CD14-positive monocyte (primary cell): ENCODE measurements at regions of chr14 and their contacts with region 1.

Region 1: DNA sequence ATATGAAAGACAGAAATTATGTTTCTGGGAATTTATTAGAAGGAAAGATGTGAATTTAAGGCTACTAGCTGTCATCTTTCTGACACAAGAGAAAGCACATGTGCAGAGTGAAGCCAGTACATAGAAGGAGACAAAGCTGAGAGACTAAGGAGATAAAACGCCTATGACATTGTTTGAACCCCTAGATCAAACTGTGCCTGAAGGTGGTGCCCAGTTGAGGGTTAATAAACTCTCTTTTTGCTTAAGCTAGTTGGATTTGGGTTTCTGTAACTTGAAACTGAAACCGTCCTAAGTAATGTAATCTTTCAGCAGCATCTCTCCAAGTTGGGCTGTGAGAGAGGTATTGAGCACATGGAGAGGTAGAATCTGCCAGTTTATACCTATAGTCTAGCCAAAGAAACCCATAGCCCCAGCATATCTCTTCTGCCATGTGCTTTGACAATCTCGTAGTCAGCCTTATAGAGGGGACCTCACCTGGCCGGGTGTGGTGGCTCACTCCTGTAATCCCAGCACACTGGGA is 84.2 kb downstream of the LRRC74A start:
- DNase-seq: no peak
- H3K4me3 ChIP-seq: no peak overlapping the region
- H3K4me3 Mint-ChIP-seq: no peak overlapping the region
- H3K27ac ChIP-seq: no peak overlapping the region
- H3K27ac Mint-ChIP-seq: peak overlapping the region in 1 of 7 donors; percentile 75
- H3K4me1 ChIP-seq: peaks cover 22 to 26% of the 10 kb centered on the region in 2 donors
- H3K4me1 Mint-ChIP-seq: peaks cover 23% of the 10 kb centered on the region
- H3K27me3 ChIP-seq: no peaks in the 10 kb centered on the region
- H3K27me3 Mint-ChIP-seq: peaks cover 2 to 9% (median 3%) of the 10 kb centered on the region in 3 donors
- CTCF ChIP-seq: no peak

Region 2: GRCh38 chr14:77028384-77029231 is 118.2 kb after region 1 on chr14 and contains the start of gene IRF2BPL:
- intact Hi-C with region 1: loop called in 1 of 2 experiments (anchors 5 kb)
- DNase-seq: peak; percentile 96 to 98 (median 97)
- H3K4me3 ChIP-seq: peak within 1 kb of the TSS; percentile 68 to 86 (median 85)
- H3K4me3 Mint-ChIP-seq: peak within 1 kb of the TSS; percentile 84 to 90
- H3K27ac ChIP-seq: peak within 1 kb of the TSS; percentile 93 to 96
- H3K27ac Mint-ChIP-seq: peak within 1 kb of the TSS; percentile 89 to 98 (median 95)
- H3K4me1 ChIP-seq: peaks cover 58 to 73% of the 10 kb centered on the region in 2 donors
- H3K4me1 Mint-ChIP-seq: peaks cover 59% of the 10 kb centered on the region
- H3K27me3 ChIP-seq: no peaks in the 10 kb centered on the region
- H3K27me3 Mint-ChIP-seq: peaks cover 0 to 1% (median 0%) of the 10 kb centered on the region in 3 donors
- CTCF ChIP-seq: no peak
- polyA plus RNA-seq, gene IRF2BPL: 1.4 to 17.9 (median 1.9) TPM

Region 3: DNA sequence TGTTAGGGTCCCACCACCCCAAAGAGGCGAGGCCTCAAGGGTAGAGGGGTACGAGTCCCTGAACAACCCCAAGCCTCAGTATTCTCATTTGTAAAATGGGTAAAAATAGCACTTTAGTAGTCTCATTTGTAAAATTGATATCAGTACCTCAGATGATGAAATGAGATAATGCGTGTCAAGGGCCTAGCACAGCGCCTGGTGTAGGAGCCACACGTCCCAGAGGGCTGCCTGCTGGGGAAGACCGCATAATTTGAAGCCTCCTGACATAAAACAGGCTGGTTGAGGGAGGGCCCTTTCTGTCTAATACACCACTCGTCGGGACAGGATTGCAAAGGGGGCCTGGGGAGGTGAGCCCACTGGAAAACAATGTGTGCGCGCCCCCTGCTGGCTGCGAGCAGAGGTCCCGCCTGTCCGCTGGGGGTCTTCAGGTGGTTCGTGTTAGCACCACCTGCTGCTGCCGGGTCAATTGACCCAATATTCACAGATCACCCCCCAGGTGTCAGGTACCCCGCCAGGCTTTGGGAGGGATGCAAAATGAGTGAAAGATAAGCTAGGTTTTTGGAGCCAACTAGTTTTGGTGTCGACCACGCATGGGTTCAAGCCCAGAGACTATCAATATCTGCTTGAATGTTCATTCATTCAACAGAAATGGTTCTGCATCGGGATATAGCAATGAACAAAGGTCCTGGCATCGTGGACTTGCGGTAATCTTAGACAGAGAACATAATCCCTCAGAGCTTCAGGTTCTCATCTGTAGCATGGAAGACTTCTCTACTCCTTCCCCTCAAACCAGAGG is 142.8 kb after region 1 on chr14:
- intact Hi-C with region 1: loop called (anchors 5 kb)
- DNase-seq: peak; percentile 59 to 79 (median 70)
- H3K4me3 ChIP-seq: no peak overlapping the region
- H3K4me3 Mint-ChIP-seq: no peak overlapping the region
- H3K27ac ChIP-seq: no peak overlapping the region
- H3K27ac Mint-ChIP-seq: peak overlapping the region in 2 of 7 donors; percentile 26 to 50
- H3K4me1 ChIP-seq: peaks cover 9 to 12% of the 10 kb centered on the region in 2 donors
- H3K4me1 Mint-ChIP-seq: peaks cover 19% of the 10 kb centered on the region
- H3K27me3 ChIP-seq: no peaks in the 10 kb centered on the region
- H3K27me3 Mint-ChIP-seq: peaks cover 0 to 4% (median 0%) of the 10 kb centered on the region in 3 donors
- CTCF ChIP-seq: peak; percentile 97

Region 4: GRCh38 chr14:77067632-77068514 is 157.4 kb after region 1 on chr14:
- intact Hi-C with region 1: loop called in 1 of 2 experiments (anchors 5 kb)
- DNase-seq: peak in 2 of 3 donors; percentile 43 to 47
- H3K4me3 ChIP-seq: no peak overlapping the region
- H3K4me3 Mint-ChIP-seq: peak overlapping the region in 1 of 2 donors; percentile 6
- H3K27ac ChIP-seq: no peak overlapping the region
- H3K27ac Mint-ChIP-seq: no peak overlapping the region
- H3K4me1 ChIP-seq: peaks cover 5 to 11% of the 10 kb centered on the region in 2 donors
- H3K4me1 Mint-ChIP-seq: peaks cover 12% of the 10 kb centered on the region
- H3K27me3 ChIP-seq: no peaks in the 10 kb centered on the region
- H3K27me3 Mint-ChIP-seq: peaks cover 7 to 8% (median 7%) of the 10 kb centered on the region in 3 donors
- CTCF ChIP-seq: peak; percentile 87